PC-9 (cell line): ENCODE measurements at regions of chr12 and their contacts with region 1.

Region 1: GRCh38 chr12:76083904-76084862 is at the start of gene NAP1L1:
- DNase-seq: peak; percentile 86 to 95
- H3K4me3 ChIP-seq: peak within 1 kb of the TSS; percentile 98
- H3K27ac ChIP-seq: peak within 1 kb of the TSS; percentile 86
- H3K4me1 ChIP-seq: peaks cover 25% of the 10 kb centered on the region
- H3K27me3 ChIP-seq: no peaks in the 10 kb centered on the region
- CTCF ChIP-seq: no peak
- total RNA-seq, gene NAP1L1: 466 and 587 TPM in 2 replicates

Region 2: GRCh38 chr12:75784591-75784990 is 299.6 kb before region 1 on chr12:
- CTCF ChIA-PET with region 1: no interaction called
- POLR2A ChIA-PET with region 1: no interaction called
- intact Hi-C with region 1: no loop called
- DNase-seq: peak; percentile 83 to 84
- H3K4me3 ChIP-seq: no peak overlapping the region
- H3K27ac ChIP-seq: peak overlapping the region; percentile 21; the same call in 1 of the 2 replicates
- H3K4me1 ChIP-seq: peaks cover 40% of the 10 kb centered on the region
- H3K27me3 ChIP-seq: no peaks in the 10 kb centered on the region
- CTCF ChIP-seq: no peak

Region 3: GRCh38 chr12:76158518-76159321 is 74.5 kb after region 1 on chr12:
- CTCF ChIA-PET with region 1: interaction called, 4 read pairs
- POLR2A ChIA-PET with region 1: no interaction called
- intact Hi-C with region 1: loop called (anchors 5 kb)
- DNase-seq: peak in 1 of 2 experiments; percentile 53
- H3K4me3 ChIP-seq: no peak overlapping the region
- H3K27ac ChIP-seq: no peak overlapping the region
- H3K4me1 ChIP-seq: no peaks in the 10 kb centered on the region
- H3K27me3 ChIP-seq: no peaks in the 10 kb centered on the region
- CTCF ChIP-seq: peak; percentile 57

Region 4: GRCh38 chr12:76290963-76291863 is 207.0 kb after region 1 on chr12:
- CTCF ChIA-PET with region 1: interaction called, 3 read pairs
- POLR2A ChIA-PET with region 1: no interaction called
- intact Hi-C with region 1: loop called (anchors 2 kb)
- DNase-seq: peak in 1 of 2 experiments; percentile 59
- H3K4me3 ChIP-seq: no peak overlapping the region
- H3K27ac ChIP-seq: peak overlapping the region; percentile 55; the same call in 1 of the 2 replicates
- H3K4me1 ChIP-seq: peaks cover 14% of the 10 kb centered on the region
- H3K27me3 ChIP-seq: no peaks in the 10 kb centered on the region
- CTCF ChIP-seq: no peak